ENCODE measurements at regions of chr12 and their contacts with region 1.

Region 1: GRCh38 chr12:131894313-131894860 is at the start of gene ULK1:
- DNase-seq: peak; percentile 85 to 97 (median 92)
- ATAC-seq: peak; percentile 88
- H3K4me3 ChIP-seq: peak within 1 kb of the TSS; percentile 71
- H3K4me3 Mint-ChIP-seq: peak within 1 kb of the TSS; percentile 86 to 94 (median 92)
- H3K27ac ChIP-seq: peak within 1 kb of the TSS; percentile 83
- H3K27ac Mint-ChIP-seq: peak within 1 kb of the TSS; percentile 68 to 94 (median 85)
- H3K4me1 ChIP-seq: peaks cover 0 to 12% of the 10 kb centered on the region in 2 donors
- H3K4me1 Mint-ChIP-seq: peaks cover 10 to 29% (median 22%) of the 10 kb centered on the region in 7 donors
- H3K27me3 ChIP-seq: no peaks in the 10 kb centered on the region
- H3K27me3 Mint-ChIP-seq: no peaks in the 10 kb centered on the region
- total RNA-seq, gene ULK1: 33.9 to 109 (median 43.8) TPM

Region 2: GRCh38 chr12:131608740-131609690 is 285.4 kb before region 1 on chr12:
- CTCF ChIA-PET with region 1: no interaction called
- POLR2A ChIA-PET with region 1: no interaction called
- intact Hi-C with region 1: loop called in 1 of 2 experiments (anchors 10 kb)
- DNase-seq: peak in 8 of 9 donors; percentile 31 to 64 (median 52)
- ATAC-seq: peak; percentile 80
- H3K4me3 ChIP-seq: no peak overlapping the region
- H3K4me3 Mint-ChIP-seq: peak overlapping the region in 3 of 10 donors; percentile 13 to 49 (median 29)
- H3K27ac ChIP-seq: no peak overlapping the region
- H3K27ac Mint-ChIP-seq: peak overlapping the region in 3 of 9 donors; percentile 38 to 79 (median 72)
- H3K4me1 ChIP-seq: peaks cover 38 to 49% of the 10 kb centered on the region in 2 donors
- H3K4me1 Mint-ChIP-seq: peaks cover 28 to 55% (median 47%) of the 10 kb centered on the region in 7 donors
- H3K27me3 ChIP-seq: no peaks in the 10 kb centered on the region
- H3K27me3 Mint-ChIP-seq: peaks cover 0 to 2% (median 0%) of the 10 kb centered on the region in 5 donors

Region 3: GRCh38 chr12:131830335-131830913 is 64.0 kb before region 1 on chr12:
- CTCF ChIA-PET with region 1: no interaction called
- POLR2A ChIA-PET with region 1: no interaction called
- intact Hi-C with region 1: loop called in 1 of 2 experiments (anchors 2 kb)
- DNase-seq: peak in 4 of 9 donors; percentile 15 to 49 (median 36)
- ATAC-seq: peak; percentile 69
- H3K4me3 ChIP-seq: peak overlapping the region; percentile 13
- H3K4me3 Mint-ChIP-seq: peak overlapping the region; percentile 61 to 78 (median 72)
- H3K27ac ChIP-seq: no peak overlapping the region
- H3K27ac Mint-ChIP-seq: no peak overlapping the region
- H3K4me1 ChIP-seq: peaks cover 0 to 19% of the 10 kb centered on the region in 2 donors
- H3K4me1 Mint-ChIP-seq: peaks cover 4 to 14% (median 10%) of the 10 kb centered on the region in 7 donors
- H3K27me3 ChIP-seq: peaks cover 0 to 6% of the 10 kb centered on the region in 2 donors
- H3K27me3 Mint-ChIP-seq: peaks cover 30 to 52% (median 35%) of the 10 kb centered on the region in 5 donors

Region 4: DNA sequence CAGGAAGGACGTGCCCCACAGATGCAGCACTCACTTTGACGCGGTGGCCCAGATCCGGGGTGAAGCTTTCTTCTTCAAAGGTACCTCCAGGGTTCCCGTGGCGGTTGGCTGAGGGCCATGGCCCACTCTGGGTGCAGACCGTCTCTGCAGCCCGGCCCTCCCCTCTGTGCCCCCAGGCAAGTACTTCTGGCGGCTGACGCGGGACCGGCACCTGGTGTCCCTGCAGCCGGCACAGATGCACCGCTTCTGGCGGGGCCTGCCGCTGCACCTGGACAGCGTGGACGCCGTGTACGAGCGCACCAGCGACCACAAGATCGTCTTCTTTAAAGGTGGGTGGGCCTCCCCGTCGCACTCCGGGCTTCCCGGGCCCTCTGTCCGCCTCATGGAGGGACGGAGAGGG is 49.3 kb before region 1 on chr12:
- CTCF ChIA-PET with region 1: no interaction called
- POLR2A ChIA-PET with region 1: no interaction called
- intact Hi-C with region 1: no loop called
- DNase-seq: no peak
- ATAC-seq: no peak
- H3K4me3 ChIP-seq: no peak overlapping the region
- H3K4me3 Mint-ChIP-seq: no peak overlapping the region
- H3K27ac ChIP-seq: no peak overlapping the region
- H3K27ac Mint-ChIP-seq: no peak overlapping the region
- H3K4me1 ChIP-seq: no peaks in the 10 kb centered on the region
- H3K4me1 Mint-ChIP-seq: no peaks in the 10 kb centered on the region
- H3K27me3 ChIP-seq: no peaks in the 10 kb centered on the region
- H3K27me3 Mint-ChIP-seq: no peaks in the 10 kb centered on the region

Region 5: DNA sequence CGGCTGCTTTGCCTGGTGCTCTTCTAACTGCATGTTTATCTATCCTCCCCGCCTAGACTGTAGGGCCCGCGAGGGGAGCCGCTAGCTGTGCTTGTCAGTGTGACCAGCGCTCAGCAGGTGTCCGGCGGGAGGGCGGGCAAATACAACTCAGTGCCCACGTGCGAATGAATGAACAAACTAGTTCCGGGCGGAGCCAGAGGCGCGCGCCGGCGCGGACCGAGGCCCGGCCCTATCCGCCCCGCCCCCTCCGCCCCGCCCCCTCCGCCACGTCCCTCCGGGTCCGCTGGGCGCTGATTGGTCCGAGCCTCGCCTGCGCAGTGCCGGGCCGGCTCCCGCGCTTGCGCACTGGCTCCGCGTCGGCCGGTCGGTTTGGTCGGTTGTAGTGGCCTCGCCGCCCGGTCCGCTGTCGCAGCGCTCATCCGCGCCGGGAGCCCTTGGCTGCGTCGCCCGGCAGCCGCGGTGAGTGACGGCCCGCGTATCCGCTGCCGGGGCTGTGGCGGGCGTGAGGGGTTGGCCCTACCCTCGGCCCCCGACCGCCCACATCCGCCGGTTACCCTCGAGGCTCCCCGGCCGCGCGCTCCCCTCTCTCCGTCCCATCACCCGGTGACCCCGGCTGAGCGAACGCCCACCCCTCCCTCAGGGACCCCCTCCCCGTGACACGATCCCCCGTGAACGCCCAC is 189.7 kb after region 1 on chr12:
- CTCF ChIA-PET with region 1: no interaction called
- POLR2A ChIA-PET with region 1: no interaction called
- intact Hi-C with region 1: loop called (anchors 2 to 10 kb)
- DNase-seq: peak; percentile 75 to 93 (median 83)
- ATAC-seq: peak; percentile 97
- H3K4me3 ChIP-seq: peak overlapping the region; percentile 52
- H3K4me3 Mint-ChIP-seq: peak overlapping the region; percentile 85 to 98 (median 91)
- H3K27ac ChIP-seq: peak overlapping the region; percentile 89
- H3K27ac Mint-ChIP-seq: peak overlapping the region in 8 of 9 donors; percentile 74 to 93 (median 88)
- H3K4me1 ChIP-seq: peaks cover 9 to 10% of the 10 kb centered on the region in 2 donors
- H3K4me1 Mint-ChIP-seq: peaks cover 17 to 35% (median 28%) of the 10 kb centered on the region in 7 donors
- H3K27me3 ChIP-seq: no peaks in the 10 kb centered on the region
- H3K27me3 Mint-ChIP-seq: no peaks in the 10 kb centered on the region